Left ventricle myocardium superior (tissue), 1 donor: ENCODE measurements at regions of chr1 and their contacts with region 1.

Region 1: DNA sequence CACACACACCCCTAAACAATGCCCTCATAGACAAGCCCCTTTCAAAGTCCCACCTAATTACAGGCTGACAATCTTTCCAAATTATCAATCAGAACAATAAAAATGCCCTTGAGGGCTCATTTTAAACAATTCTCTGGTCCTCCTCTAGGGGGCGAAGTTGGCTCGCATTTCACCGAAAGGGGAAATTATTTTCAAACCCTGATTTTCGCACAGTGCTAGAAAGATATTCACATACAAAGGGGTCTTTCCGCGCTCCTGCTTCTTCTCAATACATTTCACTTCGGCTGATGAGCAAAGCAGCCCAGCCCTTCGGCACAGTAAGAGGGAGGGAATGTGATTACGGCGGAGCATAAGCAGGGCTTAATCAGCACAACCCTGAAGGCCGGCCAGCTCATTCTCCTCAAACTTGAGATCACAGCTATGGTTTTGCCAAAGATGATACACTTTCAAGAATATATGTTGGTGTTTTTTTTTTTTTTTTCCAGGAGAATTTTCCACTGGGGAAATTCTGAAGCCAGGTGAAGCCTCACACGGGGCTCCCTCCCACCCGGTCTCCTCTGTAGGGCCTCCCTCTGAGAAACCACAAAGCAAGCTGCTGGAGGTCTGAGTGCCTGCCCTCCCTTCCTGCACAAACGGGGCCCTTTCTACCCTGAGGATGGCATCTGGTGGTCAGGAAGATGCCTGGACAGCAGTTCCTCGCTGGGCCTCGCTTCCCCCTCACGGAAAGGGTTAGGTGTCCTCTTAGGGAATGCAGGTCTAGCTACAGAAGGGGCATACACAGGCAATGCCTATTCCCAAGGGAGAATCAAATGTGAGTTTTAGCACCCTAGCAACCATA is 66.9 kb downstream of the GNG12 start:
- DNase-seq: peak; percentile 43
- ATAC-seq: peak; percentile 71

Region 2: GRCh38 chr1:67847466-67847865 is 81.1 kb after region 1 on chr1:
- intact Hi-C with region 1: loop called (anchors 5 kb)
- DNase-seq: no peak
- ATAC-seq: no peak

Region 3: GRCh38 chr1:68111519-68112436 is 345.4 kb after region 1 on chr1:
- intact Hi-C with region 1: loop called (anchors 5 kb)
- DNase-seq: peak; percentile 82
- ATAC-seq: peak; percentile 86